Mammary epithelial cell (primary cell): ENCODE measurements at regions of chr1 and their contacts with region 1.

Region 1: DNA sequence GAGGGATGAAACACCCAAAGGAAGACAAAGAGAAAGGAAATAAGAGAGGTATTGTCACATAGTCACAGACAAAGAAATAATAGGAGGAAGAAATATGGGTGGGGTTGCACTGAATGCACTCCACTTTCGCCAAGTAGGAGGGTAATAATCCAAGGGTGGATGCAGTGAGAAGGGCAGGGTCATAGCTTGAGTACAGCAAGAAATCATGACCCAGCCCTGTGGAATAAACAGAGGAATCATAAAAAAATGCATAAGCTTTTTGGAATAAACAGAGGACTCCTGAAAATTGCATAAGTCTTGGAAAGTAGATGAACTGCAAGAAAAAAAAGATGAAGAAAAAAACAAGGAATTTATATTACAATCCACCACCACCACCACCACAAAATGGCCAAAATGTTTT is 53.1 kb upstream of the CD55 start:
- DNase-seq: no peak
- H3K4me3 ChIP-seq: no peak overlapping the region
- H3K27ac ChIP-seq: no peak overlapping the region
- H3K4me1 ChIP-seq: no peaks in the 10 kb centered on the region
- H3K27me3 ChIP-seq: no peaks in the 10 kb centered on the region
- CTCF ChIP-seq: no peak

Region 2: GRCh38 chr1:207304710-207305151 is 36.4 kb after region 1 on chr1:
- CTCF ChIA-PET with region 1: no interaction called
- dilution Hi-C with region 1: loop called (anchors 5 kb)
- in situ Hi-C with region 1: no loop called
- intact Hi-C with region 1: no loop called
- DNase-seq: peak; percentile 65
- H3K4me3 ChIP-seq: no peak overlapping the region
- H3K27ac ChIP-seq: no peak overlapping the region
- H3K4me1 ChIP-seq: peaks cover 10% of the 10 kb centered on the region
- H3K27me3 ChIP-seq: no peaks in the 10 kb centered on the region
- CTCF ChIP-seq: no peak